Activated CD4-positive, alpha-beta T cell treated with anti-CD3 and anti-CD28 coated beads for 36 hours (primary cell): ENCODE measurements at regions of chr22 and their contacts with region 1.

Region 1: DNA sequence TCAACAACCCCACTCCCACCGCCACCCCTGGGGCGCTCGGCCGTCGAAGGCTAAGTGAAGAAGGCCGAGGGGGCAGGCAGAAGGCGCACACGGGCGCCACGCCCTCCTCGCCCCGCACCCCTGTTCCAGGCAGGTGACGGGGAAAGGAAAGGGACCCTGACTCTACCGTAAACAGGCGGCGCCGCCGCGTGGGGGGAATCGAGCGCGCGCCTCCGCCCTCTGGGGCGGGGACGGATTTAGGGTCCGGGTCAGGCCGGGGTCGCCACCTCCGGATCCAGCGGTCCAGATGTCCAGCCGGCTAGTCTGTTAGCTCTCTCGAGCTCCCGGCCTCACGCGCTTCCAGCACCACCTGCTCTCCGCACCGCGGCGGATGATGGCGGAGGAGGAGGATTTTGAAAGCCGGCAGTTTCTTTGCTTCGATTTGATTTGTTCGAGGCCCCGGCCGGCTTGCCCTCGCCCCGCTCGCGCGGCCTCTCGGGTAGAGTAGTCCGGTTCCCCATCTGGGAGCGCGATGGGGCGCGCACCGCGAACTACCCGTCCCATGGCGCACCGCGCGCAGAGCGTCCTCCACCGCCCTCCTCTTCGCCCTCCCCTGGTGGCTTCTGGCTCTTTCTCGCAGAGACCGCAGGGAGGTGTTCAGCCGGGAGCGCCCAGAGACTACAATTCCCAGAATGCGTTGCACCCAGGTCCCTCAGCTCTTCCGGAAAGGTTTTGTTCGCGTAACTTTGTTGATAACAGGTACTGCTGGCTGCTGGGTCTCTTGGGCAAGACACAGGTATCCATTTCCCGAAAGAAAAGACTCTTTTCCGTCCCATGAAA is at the start of gene RANGAP1:
- DNase-seq: peak; percentile 99
- ATAC-seq: peak; percentile 94
- H3K4me3 Mint-ChIP-seq: peak within 1 kb of the TSS; percentile 88
- H3K27ac Mint-ChIP-seq: peak within 1 kb of the TSS; percentile 97
- H3K4me1 Mint-ChIP-seq: peaks cover 33% of the 10 kb centered on the region
- H3K27me3 Mint-ChIP-seq: no peaks in the 10 kb centered on the region
- total RNA-seq, gene RANGAP1: 140 to 157 TPM

Region 2: DNA sequence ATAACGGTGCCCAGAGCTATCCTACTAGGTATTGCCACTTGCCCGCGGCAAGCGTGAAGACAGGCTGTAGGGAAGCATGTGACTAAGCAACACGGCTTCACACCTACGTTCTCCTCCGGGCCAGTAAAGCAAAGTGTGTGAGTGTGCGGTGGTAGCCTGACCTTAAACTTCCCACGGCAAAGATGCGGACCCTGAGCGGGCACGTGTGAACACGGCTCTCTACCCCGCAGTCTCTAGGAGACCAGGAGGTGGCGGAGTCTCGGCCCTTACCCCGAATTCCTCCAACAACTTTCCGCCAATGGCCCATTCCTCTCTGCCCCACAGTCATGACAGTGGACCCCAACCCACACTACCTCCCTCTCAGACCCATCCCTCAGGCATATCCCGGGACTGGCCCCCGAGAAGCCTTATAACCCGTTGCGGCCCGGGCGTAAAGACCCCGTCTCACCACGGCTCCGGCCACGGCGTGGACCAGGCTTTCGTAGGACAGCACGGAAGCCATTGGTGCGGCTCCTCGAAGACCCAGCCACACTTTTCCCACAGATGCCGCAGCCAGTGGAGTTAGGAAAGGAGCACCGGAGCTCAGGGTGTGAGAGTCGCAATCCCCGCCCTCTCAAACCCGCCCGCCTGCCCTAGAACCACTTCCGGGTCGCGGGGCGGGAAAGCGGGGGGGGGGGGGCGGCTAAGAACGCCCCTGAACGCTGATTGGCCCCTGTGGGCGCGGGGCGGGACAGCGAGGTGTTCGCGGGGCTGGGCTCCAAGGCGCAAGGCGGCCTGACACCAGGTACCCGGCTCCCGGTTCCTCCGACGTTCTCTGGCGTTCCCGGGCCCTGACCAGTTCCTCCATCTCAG is 467.1 kb before region 1 on chr22 and contains the start of gene SLC25A17:
- CTCF ChIA-PET with region 1: no interaction called
- POLR2A ChIA-PET with region 1: no interaction called
- intact Hi-C with region 1: loop called in 1 of 2 experiments (anchors 1 kb)
- DNase-seq: peak; percentile 93
- ATAC-seq: peak; percentile 93
- H3K4me3 Mint-ChIP-seq: peak within 1 kb of the TSS; percentile 88
- H3K27ac Mint-ChIP-seq: peak within 1 kb of the TSS; percentile 92
- H3K4me1 Mint-ChIP-seq: peaks cover 30% of the 10 kb centered on the region
- H3K27me3 Mint-ChIP-seq: no peaks in the 10 kb centered on the region
- total RNA-seq, gene SLC25A17: 23.3 to 29.7 TPM

Region 3: DNA sequence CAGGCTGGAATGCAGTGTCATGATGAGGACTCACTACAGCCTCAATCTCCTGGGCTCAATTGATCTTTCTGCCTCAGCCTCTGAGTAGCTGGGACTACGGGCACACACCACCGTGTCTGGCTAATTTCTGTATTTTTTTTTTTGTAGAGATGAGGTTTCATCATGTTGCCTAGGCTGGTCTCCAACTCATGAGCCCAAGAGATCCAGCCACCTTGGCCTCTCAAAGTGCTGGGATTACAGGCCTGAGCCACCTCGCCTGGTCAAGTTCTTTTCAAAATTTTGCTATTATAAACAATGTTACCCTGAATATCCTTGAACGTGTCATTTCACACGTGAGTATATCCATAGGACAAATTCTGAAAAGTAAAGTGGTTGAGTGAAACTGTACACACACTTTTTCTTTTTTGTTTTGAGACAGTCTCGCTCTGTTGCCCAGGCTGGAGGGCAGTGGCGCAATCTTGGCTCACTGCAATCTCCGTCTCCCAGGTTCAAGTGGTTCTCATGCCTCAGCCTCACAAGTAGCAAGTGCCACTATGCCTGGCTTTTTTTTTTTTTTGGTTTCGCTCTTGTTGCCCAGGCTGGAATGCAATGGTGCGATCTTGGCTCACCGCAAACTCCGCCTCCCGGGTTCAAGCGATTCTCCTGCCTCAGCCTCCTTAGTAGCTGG is 215.2 kb before region 1 on chr22:
- CTCF ChIA-PET with region 1: no interaction called
- POLR2A ChIA-PET with region 1: no interaction called
- intact Hi-C with region 1: loop called in 1 of 2 experiments (anchors 1 kb)
- DNase-seq: no peak
- ATAC-seq: no peak
- H3K4me3 Mint-ChIP-seq: no peak overlapping the region
- H3K27ac Mint-ChIP-seq: no peak overlapping the region
- H3K4me1 Mint-ChIP-seq: peaks cover 10% of the 10 kb centered on the region
- H3K27me3 Mint-ChIP-seq: no peaks in the 10 kb centered on the region

Region 4: GRCh38 chr22:41204992-41205900 is 80.8 kb before region 1 on chr22 and contains the start of gene L3MBTL2:
- CTCF ChIA-PET with region 1: no interaction called
- POLR2A ChIA-PET with region 1: no interaction called
- intact Hi-C with region 1: loop called (anchors 1 kb)
- DNase-seq: peak; percentile 100
- ATAC-seq: peak; percentile 100
- H3K4me3 Mint-ChIP-seq: peak within 1 kb of the TSS; percentile 86
- H3K27ac Mint-ChIP-seq: peak within 1 kb of the TSS; percentile 89
- H3K4me1 Mint-ChIP-seq: peaks cover 20% of the 10 kb centered on the region
- H3K27me3 Mint-ChIP-seq: peaks cover 10% of the 10 kb centered on the region
- total RNA-seq, gene L3MBTL2: 24.4 to 25.1 TPM

Region 5: DNA sequence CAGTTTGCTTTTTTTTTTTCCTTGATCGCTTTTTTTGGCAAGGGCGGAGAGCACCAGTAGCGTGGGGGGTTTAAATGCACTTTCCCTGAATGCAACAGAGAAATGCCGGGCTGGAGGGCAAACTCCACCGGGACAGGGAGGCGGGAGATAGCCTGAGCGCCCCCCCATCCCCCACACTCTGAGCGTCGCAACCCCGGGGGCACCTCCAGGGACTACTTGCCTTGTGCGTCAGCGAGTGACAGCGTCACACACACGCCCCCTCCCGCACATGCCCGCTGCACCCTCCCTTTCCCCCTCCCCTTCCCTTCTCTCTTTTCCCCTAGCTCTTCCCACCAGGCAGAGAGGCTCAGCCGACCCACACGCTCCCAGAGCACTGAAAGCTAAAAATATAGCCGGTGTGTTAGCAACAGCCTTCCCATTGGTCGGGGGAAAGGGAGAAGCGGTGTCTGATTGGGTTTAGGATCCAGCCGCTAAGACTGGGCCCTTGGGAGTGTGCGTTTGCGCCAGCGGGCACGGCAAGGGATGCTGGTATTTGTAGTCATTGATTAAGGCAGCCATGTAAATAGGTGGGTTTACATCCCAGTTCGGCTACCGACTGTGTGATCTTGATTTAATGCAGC is 162.3 kb after region 1 on chr22:
- CTCF ChIA-PET with region 1: no interaction called
- POLR2A ChIA-PET with region 1: interaction called, 6 read pairs
- intact Hi-C with region 1: loop called (anchors 1 kb)
- DNase-seq: peak; percentile 95
- ATAC-seq: peak; percentile 73
- H3K4me3 Mint-ChIP-seq: peak overlapping the region; percentile 86
- H3K27ac Mint-ChIP-seq: peak overlapping the region; percentile 97
- H3K4me1 Mint-ChIP-seq: peaks cover 8% of the 10 kb centered on the region
- H3K27me3 Mint-ChIP-seq: no peaks in the 10 kb centered on the region

Region 6: DNA sequence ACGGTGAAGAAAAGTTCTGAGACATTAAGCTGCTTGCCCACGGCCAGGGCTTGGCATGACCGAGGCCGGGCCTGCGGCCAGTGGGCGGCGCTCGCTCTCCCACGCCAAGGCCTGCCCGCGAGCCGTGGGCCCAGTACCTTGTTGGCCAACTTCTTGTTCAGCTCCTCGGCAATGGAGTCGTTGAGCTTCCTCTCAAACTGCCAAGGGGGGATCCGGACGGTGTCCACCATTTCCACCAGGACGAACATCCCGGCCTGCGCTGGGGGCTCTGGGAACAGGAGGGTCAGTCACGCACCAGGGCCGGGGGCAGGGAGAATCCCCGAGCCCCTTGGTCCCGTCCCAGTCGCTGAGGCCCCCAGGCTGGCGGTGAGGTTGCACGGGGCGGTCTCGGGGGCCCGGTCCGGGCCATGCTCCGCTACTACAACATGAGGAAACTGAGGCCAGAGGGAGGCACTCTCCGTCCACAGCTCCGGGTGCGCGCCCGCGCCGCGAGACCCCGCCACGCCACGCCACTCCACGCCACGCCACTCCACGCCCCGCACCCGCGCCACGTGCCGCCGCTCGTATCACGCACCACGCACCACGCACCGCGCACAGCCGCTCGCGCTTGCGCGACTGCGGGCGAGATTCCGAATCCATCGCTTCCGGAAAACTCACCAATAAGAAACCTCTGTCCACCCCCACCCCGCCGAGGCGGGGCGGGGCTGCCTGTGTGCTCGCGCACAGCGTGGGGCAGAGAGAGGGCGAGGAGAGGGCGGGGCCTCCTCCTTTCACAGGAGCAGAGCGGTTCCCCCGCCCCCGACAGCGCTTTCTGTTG is 258.0 kb after region 1 on chr22 and contains the start of gene POLR3H:
- CTCF ChIA-PET with region 1: no interaction called
- POLR2A ChIA-PET with region 1: no interaction called
- intact Hi-C with region 1: loop called (anchors 1 to 5 kb)
- DNase-seq: peak; percentile 99
- ATAC-seq: peak; percentile 99
- H3K4me3 Mint-ChIP-seq: peak within 1 kb of the TSS; percentile 81
- H3K27ac Mint-ChIP-seq: peak within 1 kb of the TSS; percentile 90
- H3K4me1 Mint-ChIP-seq: peaks cover 40% of the 10 kb centered on the region
- H3K27me3 Mint-ChIP-seq: no peaks in the 10 kb centered on the region
- total RNA-seq, gene POLR3H: 18.3 to 24.6 TPM

Region 7: GRCh38 chr22:41688365-41689211 is 402.6 kb after region 1 on chr22 and contains the start of gene SNU13:
- CTCF ChIA-PET with region 1: no interaction called
- POLR2A ChIA-PET with region 1: no interaction called
- intact Hi-C with region 1: loop called in 1 of 2 experiments (anchors 1 kb)
- DNase-seq: peak; percentile 96
- ATAC-seq: peak; percentile 93
- H3K4me3 Mint-ChIP-seq: peak within 1 kb of the TSS; percentile 98
- H3K27ac Mint-ChIP-seq: peak within 1 kb of the TSS; percentile 98
- H3K4me1 Mint-ChIP-seq: peaks cover 34% of the 10 kb centered on the region
- H3K27me3 Mint-ChIP-seq: no peaks in the 10 kb centered on the region
- total RNA-seq, gene SNU13: 275 to 281 TPM